ENCODE measurements at regions of chr19 and their contacts with region 1.

Region 1: DNA sequence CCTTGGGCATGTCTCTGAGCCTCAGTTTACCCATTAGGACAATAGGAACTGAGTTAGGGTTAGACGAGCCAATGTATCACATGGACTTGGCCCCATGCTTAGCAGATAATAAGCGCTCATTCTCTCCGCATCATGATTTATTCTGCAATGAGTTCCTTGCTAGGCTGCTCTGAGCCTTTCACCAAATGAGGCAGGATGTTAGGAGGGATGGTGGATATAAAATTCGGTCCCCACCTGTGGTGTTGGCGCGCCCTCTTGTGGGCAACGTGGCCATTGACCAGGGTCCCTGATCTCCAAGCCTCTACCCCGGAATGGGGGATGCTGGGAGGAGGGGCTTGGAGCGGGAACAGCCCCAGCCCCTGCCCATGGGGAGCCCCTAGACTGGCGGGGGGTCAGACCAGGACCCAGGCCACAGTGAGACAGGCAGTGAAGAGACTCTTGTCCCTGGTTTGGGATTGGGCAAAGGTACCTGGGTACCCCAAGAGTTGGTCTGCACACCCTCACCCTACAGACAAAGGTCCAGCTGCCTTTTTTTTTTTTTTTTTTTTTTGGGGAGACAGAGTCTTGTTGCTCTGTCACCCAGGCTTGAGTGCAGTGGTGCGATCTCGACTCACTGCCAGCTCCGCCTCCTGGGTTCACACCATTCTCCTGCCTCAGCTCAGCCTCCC is 43.9 kb downstream of the CERS4 start:
- DNase-seq: peak; percentile 46
- ATAC-seq: peak; percentile 94
- H3K4me3 ChIP-seq: no peak overlapping the region
- H3K27ac ChIP-seq: no peak overlapping the region
- H3K4me1 ChIP-seq: no peaks in the 10 kb centered on the region
- H3K27me3 ChIP-seq: no peaks in the 10 kb centered on the region
- CTCF ChIP-seq: peak; percentile 87

Region 2: DNA sequence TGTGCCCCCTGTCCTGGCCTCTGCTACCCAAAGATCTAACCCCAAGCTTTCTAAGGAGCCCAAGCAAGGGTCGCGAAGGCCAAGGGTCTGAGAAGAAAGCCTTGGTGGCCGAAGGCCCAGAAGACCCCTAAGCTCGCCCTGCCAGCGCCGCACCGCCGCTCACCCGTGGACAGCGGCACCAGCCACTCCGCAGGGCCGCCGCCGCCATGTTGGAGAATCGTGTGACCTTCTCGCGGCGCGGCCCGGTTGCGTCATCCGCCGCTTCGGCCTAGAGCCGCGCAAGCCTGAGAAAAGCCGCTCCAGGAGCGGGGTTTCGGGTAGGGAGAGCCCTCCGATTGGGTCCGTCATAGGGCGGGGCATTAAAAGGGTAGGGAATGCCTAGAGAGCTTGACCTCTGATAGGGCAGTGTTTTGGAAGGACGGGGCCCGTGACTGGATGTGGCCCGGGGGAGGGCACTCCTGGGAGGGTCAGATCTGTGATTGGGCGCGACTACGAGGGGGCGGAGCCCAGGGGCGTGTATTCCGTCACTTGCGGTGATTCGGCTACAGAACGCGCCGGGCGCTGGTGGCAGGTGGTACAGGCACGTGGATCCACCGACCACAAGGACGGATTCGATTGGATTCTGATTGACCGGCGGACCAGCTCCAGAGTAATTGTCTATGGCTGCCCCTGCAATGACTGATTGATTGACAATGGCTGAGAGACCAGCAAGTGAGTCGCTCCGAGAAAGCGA is 309.4 kb before region 1 on chr19 and contains the start of gene TIMM44:
- CTCF ChIA-PET with region 1: no interaction called
- POLR2A ChIA-PET with region 1: no interaction called
- in situ Hi-C with region 1: no loop called
- intact Hi-C with region 1: loop called (anchors 1 kb)
- DNase-seq: peak; percentile 95
- ATAC-seq: peak; percentile 99
- H3K4me3 ChIP-seq: peak within 1 kb of the TSS; percentile 92 to 96
- H3K27ac ChIP-seq: peak within 1 kb of the TSS; percentile 86
- H3K4me1 ChIP-seq: no peaks in the 10 kb centered on the region
- H3K27me3 ChIP-seq: no peaks in the 10 kb centered on the region
- CTCF ChIP-seq: no peak
- total RNA-seq, gene TIMM44: 105 TPM

Region 3: DNA sequence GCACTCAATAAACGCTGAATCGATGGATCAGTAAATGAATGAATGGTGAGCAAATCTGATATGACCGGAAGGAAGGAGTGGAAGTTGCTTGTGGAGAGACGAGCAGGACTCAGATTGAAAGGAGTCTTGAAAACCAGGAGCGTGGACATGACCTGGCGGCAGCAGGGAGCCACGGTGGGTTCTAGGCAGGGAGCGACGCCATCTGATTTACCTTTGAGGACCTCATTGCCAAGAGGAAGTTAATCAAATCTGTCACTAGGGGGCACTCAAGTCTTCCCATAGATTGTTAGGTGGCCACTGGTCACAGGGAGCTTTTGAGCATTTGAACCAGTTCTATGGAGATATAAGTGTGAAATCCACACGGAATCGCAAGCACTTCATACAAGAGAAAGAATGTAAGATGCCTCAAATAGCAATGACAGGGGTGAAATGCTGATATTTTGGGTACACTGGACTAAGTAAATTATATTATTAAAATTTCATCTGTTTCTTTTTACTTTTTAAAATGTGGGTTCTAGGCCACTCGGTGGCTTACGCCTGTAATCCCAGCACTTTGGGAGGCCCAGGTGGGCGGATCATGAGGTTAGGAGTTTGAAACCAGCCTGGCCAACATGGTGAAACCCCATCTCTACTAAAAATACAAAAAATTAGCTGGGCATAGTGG is 94.5 kb before region 1 on chr19:
- CTCF ChIA-PET with region 1: interaction called, 6 read pairs
- POLR2A ChIA-PET with region 1: no interaction called
- in situ Hi-C with region 1: no loop called
- intact Hi-C with region 1: loop called (anchors 1 kb)
- DNase-seq: peak; percentile 39
- ATAC-seq: peak; percentile 75
- H3K4me3 ChIP-seq: no peak overlapping the region
- H3K27ac ChIP-seq: no peak overlapping the region
- H3K4me1 ChIP-seq: peaks cover 10% of the 10 kb centered on the region
- H3K27me3 ChIP-seq: no peaks in the 10 kb centered on the region
- CTCF ChIP-seq: peak; percentile 75

Region 4: DNA sequence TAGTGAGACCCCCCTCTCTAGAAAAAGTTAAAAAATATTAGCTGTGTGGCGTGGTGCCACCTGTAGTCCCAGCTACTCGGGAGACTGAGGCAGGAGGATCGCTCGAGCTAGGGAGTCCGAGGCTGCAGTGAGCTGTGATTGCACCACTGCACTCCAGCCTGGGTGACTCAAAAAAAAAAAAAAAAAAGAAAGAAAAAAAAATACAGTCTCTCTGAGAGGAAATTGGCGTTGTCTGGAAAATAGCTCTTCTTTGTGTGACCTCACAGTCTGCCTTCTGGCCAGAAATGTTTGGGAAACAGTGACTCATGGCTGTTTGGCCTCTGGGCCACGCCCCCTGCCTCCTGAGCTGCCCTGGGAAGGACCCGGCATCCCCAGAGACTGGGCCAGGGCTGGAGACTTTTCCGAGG is 170.8 kb after region 1 on chr19:
- CTCF ChIA-PET with region 1: no interaction called
- POLR2A ChIA-PET with region 1: no interaction called
- in situ Hi-C with region 1: no loop called
- intact Hi-C with region 1: no loop called
- DNase-seq: peak; percentile 57
- ATAC-seq: peak; percentile 95
- H3K4me3 ChIP-seq: no peak overlapping the region
- H3K27ac ChIP-seq: no peak overlapping the region
- H3K4me1 ChIP-seq: peaks cover 5% of the 10 kb centered on the region; the same call in 1 of the 2 replicates
- H3K27me3 ChIP-seq: no peaks in the 10 kb centered on the region
- CTCF ChIP-seq: no peak

Measured in Panc1 (cell line).